Activated CD8-positive, alpha-beta T cell treated with anti-CD3 and anti-CD28 coated beads, Interleukin-2, amount 10 ng/mL, durations not matched to agents 7 days and 5 days (primary cell): ENCODE measurements at regions of chr11 and their contacts with region 1.

Region 1: DNA sequence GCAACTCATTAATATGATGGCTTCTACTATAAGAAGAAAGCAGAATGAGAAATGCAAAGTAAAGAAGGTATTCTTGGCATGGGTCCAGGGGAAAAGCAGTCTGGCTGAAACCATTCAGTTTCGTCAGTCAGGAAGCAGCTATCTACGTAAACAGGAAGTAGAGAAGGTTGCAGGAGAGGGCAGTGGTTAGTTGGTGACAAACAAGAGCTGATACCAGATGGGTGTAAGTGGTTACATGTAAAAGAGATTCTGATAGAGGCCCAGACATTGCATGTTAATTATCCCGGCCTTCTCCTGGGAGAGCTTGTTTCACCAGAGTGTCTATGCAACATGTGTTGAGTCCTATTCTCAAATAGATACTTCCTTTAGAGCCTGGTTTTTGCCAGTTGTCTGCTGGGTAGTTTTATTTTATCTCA is 58.4 kb upstream of the PSMA1 start:
- DNase-seq: peak; percentile 84
- ATAC-seq: peak; percentile 97
- H3K4me3 Mint-ChIP-seq: peak overlapping the region; percentile 42
- H3K27ac Mint-ChIP-seq: peak overlapping the region; percentile 90
- H3K4me1 Mint-ChIP-seq: peaks cover 56% of the 10 kb centered on the region
- H3K27me3 Mint-ChIP-seq: no peaks in the 10 kb centered on the region

Region 2: DNA sequence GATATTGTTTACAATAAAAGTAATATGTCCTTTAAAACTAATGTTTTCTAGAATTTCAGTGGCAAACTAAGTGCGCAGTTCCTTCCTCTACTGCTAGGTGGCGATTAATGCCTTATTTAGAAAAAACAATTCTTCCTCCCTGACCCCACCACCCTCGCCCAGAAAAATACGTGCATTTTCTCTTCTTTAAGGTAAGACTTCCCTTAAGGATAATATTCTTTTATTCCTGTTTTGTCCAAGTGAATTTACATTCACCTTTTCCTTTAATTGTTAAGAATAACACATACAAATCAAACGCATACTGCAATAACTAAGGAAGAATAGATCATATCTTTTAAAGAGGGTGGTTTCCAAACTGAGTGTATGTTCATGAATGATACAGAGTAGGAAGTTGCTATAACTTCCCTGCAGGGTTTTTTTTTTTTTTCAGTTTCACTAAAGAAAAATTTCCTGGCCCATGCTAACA is 41.4 kb before region 1 on chr11:
- CTCF ChIA-PET with region 1: interaction called, 17 read pairs
- POLR2A ChIA-PET with region 1: interaction called, 4 read pairs
- DNase-seq: peak; percentile 66
- ATAC-seq: peak; percentile 69
- H3K4me3 Mint-ChIP-seq: peak overlapping the region; percentile 53
- H3K27ac Mint-ChIP-seq: peak overlapping the region; percentile 58
- H3K4me1 Mint-ChIP-seq: peaks cover 36% of the 10 kb centered on the region
- H3K27me3 Mint-ChIP-seq: no peaks in the 10 kb centered on the region

Region 3: DNA sequence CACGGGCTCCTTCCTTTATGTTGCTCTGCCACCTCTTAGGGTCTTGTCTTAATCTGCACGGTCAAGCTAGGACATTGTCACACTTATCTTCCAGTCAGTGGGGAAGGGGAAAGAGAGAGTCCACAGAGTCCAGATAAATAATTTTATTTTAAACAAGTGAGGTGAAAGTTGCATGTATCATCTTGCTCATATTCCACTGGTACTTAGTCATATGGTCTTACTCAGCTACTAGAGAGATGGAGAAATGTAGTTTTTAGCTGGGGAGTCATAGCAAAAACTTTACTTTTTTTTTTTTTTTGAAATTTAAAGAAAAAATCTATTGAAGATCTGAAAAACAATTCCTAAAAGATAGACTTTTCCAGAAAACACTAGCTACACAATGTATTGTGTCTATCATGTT is 94.1 kb after region 1 on chr11:
- CTCF ChIA-PET with region 1: no interaction called
- POLR2A ChIA-PET with region 1: no interaction called
- DNase-seq: no peak
- ATAC-seq: no peak
- H3K4me3 Mint-ChIP-seq: no peak overlapping the region
- H3K27ac Mint-ChIP-seq: no peak overlapping the region
- H3K4me1 Mint-ChIP-seq: peaks cover 33% of the 10 kb centered on the region
- H3K27me3 Mint-ChIP-seq: no peaks in the 10 kb centered on the region

Region 4: DNA sequence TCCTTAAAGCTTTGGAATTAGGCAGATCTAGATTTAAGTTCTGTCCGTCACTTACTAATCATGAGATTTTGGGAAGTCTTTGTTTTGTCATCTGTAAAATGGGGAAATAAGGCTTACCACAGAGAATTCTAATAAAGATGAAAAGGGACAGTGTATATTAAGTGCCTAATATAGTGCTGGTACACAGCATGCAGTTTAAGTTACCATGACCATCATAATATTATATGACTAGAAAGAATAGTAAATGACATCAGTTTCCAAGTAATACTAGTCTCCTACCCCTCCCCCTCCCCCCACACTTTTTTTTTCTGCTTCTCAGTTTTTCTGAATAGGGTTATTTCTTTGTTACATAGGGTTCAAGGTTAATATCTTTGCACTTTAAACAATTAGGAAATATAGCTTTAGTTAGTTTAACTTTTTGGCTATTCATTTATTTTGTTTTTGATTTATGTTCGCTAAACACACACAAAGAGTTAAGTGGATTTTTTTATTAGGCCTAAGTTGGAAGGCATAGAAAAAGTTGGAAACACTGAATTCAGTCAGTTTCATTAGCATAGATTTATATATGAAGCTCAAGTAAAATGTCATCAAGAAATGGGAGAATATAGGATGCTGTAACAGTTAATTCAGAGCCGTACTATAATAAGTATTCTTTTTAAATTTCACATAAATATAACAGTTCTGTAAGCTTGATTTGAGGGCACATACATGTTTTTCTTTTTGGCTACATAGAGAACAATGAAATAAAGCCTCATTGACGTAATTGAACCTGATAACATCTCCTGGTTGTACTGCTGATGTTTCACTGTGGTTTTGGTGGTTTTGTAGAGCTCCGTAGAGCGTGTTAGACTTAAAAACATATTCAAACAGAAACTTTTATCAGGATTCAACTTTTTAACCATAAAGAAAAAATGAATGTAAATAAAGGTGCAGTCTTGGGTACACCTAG is 186.3 kb after region 1 on chr11:
- CTCF ChIA-PET with region 1: interaction called, 4 read pairs
- POLR2A ChIA-PET with region 1: interaction called, 10 read pairs
- DNase-seq: peak; percentile 77
- ATAC-seq: peak; percentile 79
- H3K4me3 Mint-ChIP-seq: no peak overlapping the region
- H3K27ac Mint-ChIP-seq: no peak overlapping the region
- H3K4me1 Mint-ChIP-seq: peaks cover 46% of the 10 kb centered on the region
- H3K27me3 Mint-ChIP-seq: no peaks in the 10 kb centered on the region

Region 5: GRCh38 chr11:14892036-14892567 is 313.6 kb after region 1 on chr11 and contains the start of gene CYP2R1:
- CTCF ChIA-PET with region 1: no interaction called
- POLR2A ChIA-PET with region 1: interaction called, 10 read pairs
- DNase-seq: peak; percentile 95
- ATAC-seq: peak; percentile 95
- H3K4me3 Mint-ChIP-seq: peak within 1 kb of the TSS; percentile 82
- H3K27ac Mint-ChIP-seq: peak within 1 kb of the TSS; percentile 90
- H3K4me1 Mint-ChIP-seq: peaks cover 55% of the 10 kb centered on the region
- H3K27me3 Mint-ChIP-seq: no peaks in the 10 kb centered on the region
- total RNA-seq, gene CYP2R1: 14.4 to 18.8 TPM

Region 6: GRCh38 chr11:15006139-15006759 is 427.7 kb after region 1 on chr11:
- CTCF ChIA-PET with region 1: no interaction called
- POLR2A ChIA-PET with region 1: no interaction called
- DNase-seq: no peak
- ATAC-seq: peak; percentile 65
- H3K4me3 Mint-ChIP-seq: no peak overlapping the region
- H3K27ac Mint-ChIP-seq: no peak overlapping the region
- H3K4me1 Mint-ChIP-seq: no peaks in the 10 kb centered on the region
- H3K27me3 Mint-ChIP-seq: peaks cover 35% of the 10 kb centered on the region